ENCODE measurements at regions of chr12 and their contacts with region 1.

Region 1: DNA sequence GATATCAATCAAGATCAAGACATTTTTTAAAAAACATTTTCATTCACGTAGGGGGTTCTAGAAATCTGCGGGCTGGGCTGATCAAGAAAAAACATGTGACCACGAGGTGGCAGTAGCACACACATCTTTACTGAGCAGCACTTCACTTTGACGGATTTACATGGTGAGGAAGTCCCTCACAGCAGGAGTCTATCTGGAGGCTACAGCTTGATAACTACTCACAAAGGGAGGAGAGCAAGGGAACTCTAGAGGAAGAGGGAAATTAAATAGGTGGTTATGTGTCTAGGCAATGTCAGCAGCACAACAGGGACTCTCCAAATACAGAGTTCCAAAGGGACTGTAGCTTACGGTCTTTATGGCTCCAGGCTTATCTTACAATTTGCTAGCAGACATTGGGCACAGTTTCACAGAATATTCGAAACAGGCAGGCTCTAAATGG is 248.1 kb downstream of the DPY19L2 start:
- DNase-seq: peak; percentile 27
- H3K4me3 ChIP-seq: no peak overlapping the region
- H3K27ac ChIP-seq: no peak overlapping the region
- H3K27me3 ChIP-seq: no peaks in the 10 kb centered on the region
- CTCF ChIP-seq: peak; percentile 69

Region 2: GRCh38 chr12:63410197-63410596 is 10.0 kb before region 1 on chr12:
- CTCF ChIA-PET with region 1: interaction called, 22 read pairs
- POLR2A ChIA-PET with region 1: no interaction called
- DNase-seq: no peak
- H3K4me3 ChIP-seq: no peak overlapping the region
- H3K27ac ChIP-seq: no peak overlapping the region
- H3K27me3 ChIP-seq: no peaks in the 10 kb centered on the region
- CTCF ChIP-seq: no peak

Region 3: DNA sequence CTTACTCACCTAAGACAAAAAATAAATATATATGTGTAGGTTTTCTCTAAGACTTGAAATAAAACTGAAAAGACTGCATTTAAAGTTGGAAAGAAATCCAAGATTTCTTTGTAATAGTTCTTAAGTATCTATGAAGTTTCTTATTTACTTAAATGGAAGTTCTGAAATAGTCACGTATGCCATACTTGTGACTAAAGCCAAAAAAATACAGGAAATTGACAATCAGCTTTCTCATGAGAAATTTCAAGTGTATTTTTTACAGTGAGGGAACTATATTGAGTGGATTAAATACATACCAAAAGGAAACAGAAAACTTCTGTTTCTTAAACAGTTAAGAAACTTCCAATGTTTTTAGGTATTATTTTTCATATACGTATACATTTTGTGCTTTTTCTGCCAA is 60.0 kb after region 1 on chr12:
- CTCF ChIA-PET with region 1: no interaction called
- POLR2A ChIA-PET with region 1: no interaction called
- DNase-seq: no peak
- H3K4me3 ChIP-seq: no peak overlapping the region
- H3K27ac ChIP-seq: no peak overlapping the region
- H3K27me3 ChIP-seq: no peaks in the 10 kb centered on the region
- CTCF ChIP-seq: no peak

Region 4: GRCh38 chr12:63766498-63766897 is 346.3 kb after region 1 on chr12:
- CTCF ChIA-PET with region 1: interaction called, 14 read pairs
- POLR2A ChIA-PET with region 1: no interaction called
- DNase-seq: no peak
- H3K4me3 ChIP-seq: no peak overlapping the region
- H3K27ac ChIP-seq: no peak overlapping the region
- H3K27me3 ChIP-seq: peaks cover 5% of the 10 kb centered on the region
- CTCF ChIP-seq: no peak; the same call in 1 of the 2 replicates